Right lobe of liver (tissue), 6 donors: ENCODE measurements at regions of chr12 and their contacts with region 1.

Region 1: GRCh38 chr12:52156736-52157565 is 34.9 kb downstream of the KRT80 start:
- DNase-seq: peak; percentile 74 to 80 (median 78)
- ATAC-seq: peak; percentile 72 to 84 (median 78)
- H3K4me3 ChIP-seq: no peak overlapping the region
- H3K27ac ChIP-seq: no peak overlapping the region
- H3K4me1 ChIP-seq: no peaks in the 10 kb centered on the region
- H3K27me3 ChIP-seq: no peaks in the 10 kb centered on the region
- CTCF ChIP-seq: peak; percentile 86 to 93 (median 90)
- POLR2A ChIP-seq: no peak

Region 2: DNA sequence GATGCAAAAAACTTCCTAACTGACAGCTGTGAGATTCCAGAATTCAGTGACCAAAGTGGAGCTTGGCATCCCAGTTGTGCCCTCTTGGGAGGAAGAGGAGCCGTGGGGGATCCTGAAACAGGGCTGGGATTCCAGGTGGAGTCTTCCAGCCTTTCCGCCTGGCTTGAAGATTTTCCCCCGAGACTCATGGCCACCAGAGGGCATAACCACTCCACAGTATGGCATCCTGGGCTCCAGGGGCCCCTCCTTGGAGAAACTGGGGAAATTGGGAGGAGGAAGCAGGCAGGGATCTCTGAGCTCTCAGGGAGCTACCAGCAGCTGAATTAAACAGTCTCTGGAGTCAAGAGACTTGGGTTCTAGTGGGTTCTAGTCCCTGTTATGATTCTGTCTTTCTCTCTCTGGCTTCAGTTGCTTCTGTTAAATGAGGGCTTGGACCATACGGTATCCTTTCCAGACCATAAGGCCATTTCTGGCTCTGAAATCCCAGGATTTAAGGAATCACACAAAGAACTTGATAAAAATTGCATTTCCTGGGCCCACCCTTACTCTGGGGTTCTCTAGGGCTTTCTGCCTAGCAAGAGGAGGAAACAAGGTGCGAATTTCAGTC is 152.8 kb before region 1 on chr12:
- intact Hi-C with region 1: no loop called
- DNase-seq: peak in 1 of 3 donors; percentile 52
- ATAC-seq: peak; percentile 31 to 53 (median 50)
- H3K4me3 ChIP-seq: no peak overlapping the region
- H3K27ac ChIP-seq: no peak overlapping the region
- H3K4me1 ChIP-seq: peaks cover 0 to 9% (median 0%) of the 10 kb centered on the region in 4 donors
- H3K27me3 ChIP-seq: no peaks in the 10 kb centered on the region
- CTCF ChIP-seq: peak; percentile 48 to 68 (median 59)
- POLR2A ChIP-seq: no peak

Region 3: GRCh38 chr12:52221912-52222457 is 65.0 kb after region 1 on chr12:
- intact Hi-C with region 1: no loop called
- DNase-seq: peak in 1 of 3 donors; percentile 46
- ATAC-seq: peak in 3 of 4 donors; percentile 11 to 58 (median 52)
- H3K4me3 ChIP-seq: no peak overlapping the region
- H3K27ac ChIP-seq: no peak overlapping the region
- H3K4me1 ChIP-seq: no peaks in the 10 kb centered on the region
- H3K27me3 ChIP-seq: no peaks in the 10 kb centered on the region
- CTCF ChIP-seq: peak; percentile 12 to 39 (median 30)
- POLR2A ChIP-seq: no peak

Region 4: DNA sequence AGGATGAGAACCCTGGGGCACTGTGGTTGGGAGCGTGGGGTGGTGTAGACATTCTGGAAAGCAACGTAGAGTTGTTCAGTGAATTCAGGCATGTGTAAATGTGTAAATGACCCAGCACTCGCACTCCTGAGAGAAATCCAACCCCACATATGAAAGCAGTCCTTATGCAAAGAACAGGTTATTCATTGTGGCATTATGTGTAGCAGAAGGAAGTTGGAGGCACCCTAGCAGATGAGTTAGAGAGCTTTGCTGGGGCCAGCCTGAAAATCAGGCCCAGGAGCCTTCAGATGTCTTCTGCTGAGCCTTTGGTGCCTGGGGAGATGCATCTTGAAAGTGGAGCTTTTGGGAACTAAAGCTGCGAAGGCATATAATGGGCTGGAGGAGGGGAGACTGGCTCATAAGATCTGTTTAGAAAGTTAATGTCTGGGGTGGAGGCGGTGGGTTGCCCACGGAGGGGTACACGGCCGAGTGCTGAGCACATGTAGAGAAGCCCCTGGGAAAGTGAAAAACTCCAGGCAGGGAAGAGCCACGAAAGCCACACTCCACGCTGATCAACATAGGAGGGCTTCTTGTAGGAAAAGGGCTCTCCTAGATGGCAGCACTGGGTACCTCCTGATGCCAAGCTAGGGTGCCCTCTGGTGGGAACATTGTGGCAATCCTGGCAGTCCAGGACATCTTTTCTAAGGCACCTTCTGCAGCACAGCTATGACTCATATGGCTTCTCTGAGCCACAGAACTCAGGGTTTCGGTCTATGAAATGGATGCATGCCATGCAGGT is 170.3 kb after region 1 on chr12:
- intact Hi-C with region 1: loop called (anchors 10 kb)
- DNase-seq: peak; percentile 71 to 85 (median 76)
- ATAC-seq: peak; percentile 93 to 96 (median 94)
- H3K4me3 ChIP-seq: no peak overlapping the region
- H3K27ac ChIP-seq: no peak overlapping the region
- H3K4me1 ChIP-seq: peaks cover 0 to 14% (median 0%) of the 10 kb centered on the region in 4 donors
- H3K27me3 ChIP-seq: no peaks in the 10 kb centered on the region
- CTCF ChIP-seq: peak; percentile 72 to 96 (median 92)
- POLR2A ChIP-seq: no peak

Region 5: DNA sequence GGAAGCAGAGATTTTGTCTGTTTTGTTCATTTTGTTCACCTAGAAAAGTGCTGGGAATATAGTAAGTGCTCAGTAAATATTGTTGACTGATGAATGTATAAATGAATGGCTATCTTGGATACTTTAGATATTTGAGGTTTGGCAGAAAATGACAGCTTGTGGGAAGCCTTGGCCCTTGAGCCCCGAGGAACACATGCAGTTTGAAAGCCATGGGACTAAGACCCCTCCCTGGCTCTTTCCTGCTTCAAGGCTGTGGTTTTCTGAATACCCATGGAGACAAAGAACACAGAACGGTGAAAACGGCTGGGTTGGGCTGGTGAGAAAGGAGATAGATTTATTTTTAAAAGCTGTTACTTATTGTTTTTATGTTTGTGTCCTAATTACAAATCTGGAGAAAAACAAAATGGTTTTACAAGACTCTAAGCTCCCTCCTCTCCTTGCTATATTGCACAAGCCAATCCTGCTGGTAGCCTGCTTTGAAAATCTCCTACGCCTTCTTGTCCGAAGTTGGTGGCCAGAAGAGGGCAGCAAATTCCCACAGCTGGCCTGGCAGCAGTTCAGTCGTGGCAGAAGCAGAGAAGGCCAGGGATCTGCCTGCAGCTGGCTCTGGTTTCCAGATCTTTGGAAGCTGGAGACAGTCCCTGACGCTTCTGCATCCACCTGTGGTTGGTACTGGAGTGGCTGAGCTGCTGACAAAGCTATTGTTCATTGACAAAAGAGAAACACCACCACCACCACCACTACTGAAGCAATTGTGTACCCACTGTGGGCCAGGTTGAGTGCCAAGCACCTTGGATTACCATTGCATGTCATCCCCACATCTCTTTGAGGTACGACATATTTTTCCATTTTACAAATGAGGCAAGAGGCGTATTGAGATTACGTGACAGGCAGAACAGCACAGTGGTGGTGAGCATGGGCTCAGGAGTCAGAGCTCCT is 215.5 kb after region 1 on chr12:
- intact Hi-C with region 1: no loop called
- DNase-seq: peak; percentile 78 to 86 (median 82)
- ATAC-seq: peak; percentile 94 to 99 (median 97)
- H3K4me3 ChIP-seq: no peak overlapping the region
- H3K27ac ChIP-seq: no peak overlapping the region
- H3K4me1 ChIP-seq: no peaks in the 10 kb centered on the region
- H3K27me3 ChIP-seq: no peaks in the 10 kb centered on the region
- CTCF ChIP-seq: peak; percentile 78 to 87 (median 82)
- POLR2A ChIP-seq: no peak